Calu3 (cell line): ENCODE measurements at regions of chrX and their contacts with region 1.

Region 1: DNA sequence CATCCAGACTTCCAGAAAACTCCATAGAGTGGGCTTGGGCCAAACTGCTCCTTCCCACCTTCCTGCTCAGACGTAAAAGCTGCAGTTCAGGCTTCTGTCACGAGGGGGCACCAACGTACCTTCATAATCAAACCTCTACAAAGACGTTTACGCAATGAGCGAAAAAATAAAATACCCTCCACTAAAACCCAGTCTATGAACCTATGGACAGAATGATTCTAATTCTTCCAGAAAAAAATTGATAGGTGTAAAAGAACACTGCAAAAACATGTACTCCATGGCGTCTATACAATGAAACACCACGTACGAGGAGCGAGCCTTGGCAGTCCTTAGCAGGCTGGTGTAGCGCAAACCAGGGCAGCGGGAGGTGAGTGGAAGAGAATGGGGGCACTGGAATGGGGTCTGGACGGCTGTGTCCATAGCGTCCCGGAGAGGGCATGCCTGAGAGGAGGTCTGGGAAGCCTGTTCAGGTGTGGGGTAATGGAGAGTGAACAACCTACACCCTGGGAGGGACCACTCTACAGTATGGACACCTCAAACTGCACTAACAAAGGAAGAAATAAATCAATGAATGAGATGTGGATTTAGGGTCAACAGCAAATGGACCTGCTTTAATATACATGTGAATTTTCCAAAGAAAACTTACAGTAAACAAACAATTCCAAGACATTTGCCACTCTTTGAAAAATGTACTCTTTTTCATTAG is 14.4 kb upstream of the RAB40A start:
- DNase-seq: peak; percentile 73
- H3K4me3 Mint-ChIP-seq: peak overlapping the region; percentile 69
- H3K27ac Mint-ChIP-seq: no peak overlapping the region
- H3K4me1 Mint-ChIP-seq: no peaks in the 10 kb centered on the region
- H3K27me3 Mint-ChIP-seq: no peaks in the 10 kb centered on the region
- CTCF ChIP-seq: peak; percentile 66

Region 2: DNA sequence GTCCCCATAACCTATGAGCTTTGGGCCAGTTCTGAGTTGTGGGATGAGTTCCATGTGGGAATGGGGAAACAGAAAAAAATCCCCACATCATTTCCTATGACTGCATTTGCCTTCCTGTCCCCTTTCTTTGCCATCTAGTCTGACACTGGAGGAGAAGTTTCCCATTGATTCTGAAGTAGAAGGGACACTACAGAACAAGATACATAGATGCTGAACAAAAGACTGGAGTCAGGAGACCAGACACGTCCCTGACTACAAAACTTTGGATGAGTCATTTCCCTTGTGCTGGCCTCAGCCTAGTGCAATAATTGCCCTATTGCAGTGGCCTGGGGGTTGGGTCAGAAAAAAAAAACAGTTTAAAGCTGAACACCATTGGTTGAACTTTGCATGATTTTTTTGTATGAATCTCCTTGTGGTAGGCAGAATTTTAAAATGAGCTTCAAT is 135.2 kb before region 1 on chrX:
- CTCF ChIA-PET with region 1: no interaction called
- intact Hi-C with region 1: no loop called
- DNase-seq: peak; percentile 16
- H3K4me3 Mint-ChIP-seq: no peak overlapping the region
- H3K27ac Mint-ChIP-seq: no peak overlapping the region
- H3K4me1 Mint-ChIP-seq: peaks cover 6% of the 10 kb centered on the region
- H3K27me3 Mint-ChIP-seq: no peaks in the 10 kb centered on the region
- CTCF ChIP-seq: no peak

Region 3: DNA sequence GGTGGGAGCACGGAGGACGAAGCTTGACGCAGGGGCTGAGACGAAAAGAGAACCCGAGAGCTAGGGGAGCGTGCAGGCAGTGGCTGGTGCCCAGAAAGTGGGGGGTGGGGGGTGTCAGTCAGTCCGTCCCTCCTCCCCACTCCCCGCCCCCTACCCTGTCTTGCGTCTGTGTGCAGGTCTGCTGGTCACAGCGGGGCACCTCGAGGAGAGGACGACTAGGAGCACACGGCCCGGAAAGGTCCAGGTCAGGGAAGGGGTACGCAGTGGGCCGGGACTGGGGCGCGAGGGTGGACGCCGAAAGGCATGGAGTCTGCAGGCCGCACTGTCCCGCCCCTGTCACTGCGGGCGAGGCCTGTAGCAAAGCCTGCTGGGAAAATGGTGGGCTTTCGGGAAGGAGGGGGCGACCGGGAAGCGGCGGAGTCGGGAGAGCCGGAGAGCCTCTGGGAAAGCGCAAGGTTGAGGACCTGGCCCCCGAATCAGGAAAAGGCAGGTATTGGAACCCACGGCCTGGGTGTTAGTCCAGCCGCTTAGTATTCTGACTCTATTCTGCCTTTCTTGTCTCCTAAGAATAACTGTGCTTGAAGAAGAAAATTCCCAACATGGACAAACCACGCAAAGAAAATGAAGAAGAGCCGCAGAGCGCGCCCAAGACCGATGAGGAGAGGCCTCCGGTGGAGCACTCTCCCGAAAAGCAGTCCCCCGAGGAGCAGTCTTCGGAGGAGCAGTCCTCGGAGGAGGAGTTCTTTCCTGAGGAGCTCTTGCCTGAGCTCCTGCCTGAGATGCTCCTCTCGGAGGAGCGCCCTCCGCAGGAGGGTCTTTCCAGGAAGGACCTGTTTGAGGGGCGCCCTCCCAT is 95.9 kb after region 1 on chrX:
- CTCF ChIA-PET with region 1: interaction called, 8 read pairs
- intact Hi-C with region 1: loop called (anchors 5 kb)
- DNase-seq: peak; percentile 65
- H3K4me3 Mint-ChIP-seq: peak overlapping the region; percentile 97
- H3K27ac Mint-ChIP-seq: peak overlapping the region; percentile 48
- H3K4me1 Mint-ChIP-seq: peaks cover 9% of the 10 kb centered on the region
- H3K27me3 Mint-ChIP-seq: no peaks in the 10 kb centered on the region
- CTCF ChIP-seq: peak; percentile 43

Region 4: DNA sequence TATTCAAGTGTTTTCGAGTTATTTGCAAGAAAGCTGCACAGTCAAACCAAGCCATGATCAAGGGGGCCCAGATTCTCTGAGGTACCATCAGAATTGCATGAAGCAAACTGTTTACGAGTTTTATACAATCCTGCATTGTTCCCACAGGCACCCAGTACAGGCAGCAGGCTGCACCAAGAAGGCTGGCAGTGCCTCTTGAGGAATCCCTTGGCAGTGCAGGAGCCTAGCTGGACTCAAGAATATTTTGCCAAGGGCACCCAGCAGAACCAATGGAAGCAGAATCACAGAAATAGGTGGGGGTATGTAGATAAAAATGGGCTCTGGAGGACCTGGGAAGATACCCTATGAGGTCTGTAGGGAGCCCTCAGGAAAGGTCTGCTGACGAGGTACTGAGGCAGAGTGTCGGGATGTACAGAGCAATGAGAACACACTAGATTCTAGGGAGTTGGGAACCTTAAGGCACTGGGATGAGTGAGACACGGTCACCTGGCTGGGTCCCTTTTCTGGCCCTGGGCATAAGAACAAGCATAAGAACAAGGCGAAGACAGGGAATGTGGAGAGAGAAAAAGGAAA is 240.5 kb after region 1 on chrX:
- CTCF ChIA-PET with region 1: interaction called, 10 read pairs
- intact Hi-C with region 1: loop called (anchors 2 kb)
- DNase-seq: peak; percentile 6
- H3K4me3 Mint-ChIP-seq: no peak overlapping the region
- H3K27ac Mint-ChIP-seq: no peak overlapping the region
- H3K4me1 Mint-ChIP-seq: no peaks in the 10 kb centered on the region
- H3K27me3 Mint-ChIP-seq: peaks cover 76% of the 10 kb centered on the region
- CTCF ChIP-seq: peak; percentile 10

Region 5: GRCh38 chrX:103817502-103817901 is 283.8 kb after region 1 on chrX:
- CTCF ChIA-PET with region 1: no interaction called
- intact Hi-C with region 1: loop called (anchors 1 kb)
- DNase-seq: peak; percentile 43
- H3K4me3 Mint-ChIP-seq: no peak overlapping the region
- H3K27ac Mint-ChIP-seq: no peak overlapping the region
- H3K4me1 Mint-ChIP-seq: no peaks in the 10 kb centered on the region
- H3K27me3 Mint-ChIP-seq: peaks cover 37% of the 10 kb centered on the region
- CTCF ChIP-seq: peak; percentile 32